Right ventricle myocardium inferior (tissue), 1 donor: ENCODE measurements at regions of chrX and their contacts with region 1.

Region 1: GRCh38 chrX:71365876-71366673 is at the start of gene TAF1:
- DNase-seq: peak; percentile 97
- ATAC-seq: peak; percentile 98
- total RNA-seq, gene TAF1: 14.6 TPM

Region 2: DNA sequence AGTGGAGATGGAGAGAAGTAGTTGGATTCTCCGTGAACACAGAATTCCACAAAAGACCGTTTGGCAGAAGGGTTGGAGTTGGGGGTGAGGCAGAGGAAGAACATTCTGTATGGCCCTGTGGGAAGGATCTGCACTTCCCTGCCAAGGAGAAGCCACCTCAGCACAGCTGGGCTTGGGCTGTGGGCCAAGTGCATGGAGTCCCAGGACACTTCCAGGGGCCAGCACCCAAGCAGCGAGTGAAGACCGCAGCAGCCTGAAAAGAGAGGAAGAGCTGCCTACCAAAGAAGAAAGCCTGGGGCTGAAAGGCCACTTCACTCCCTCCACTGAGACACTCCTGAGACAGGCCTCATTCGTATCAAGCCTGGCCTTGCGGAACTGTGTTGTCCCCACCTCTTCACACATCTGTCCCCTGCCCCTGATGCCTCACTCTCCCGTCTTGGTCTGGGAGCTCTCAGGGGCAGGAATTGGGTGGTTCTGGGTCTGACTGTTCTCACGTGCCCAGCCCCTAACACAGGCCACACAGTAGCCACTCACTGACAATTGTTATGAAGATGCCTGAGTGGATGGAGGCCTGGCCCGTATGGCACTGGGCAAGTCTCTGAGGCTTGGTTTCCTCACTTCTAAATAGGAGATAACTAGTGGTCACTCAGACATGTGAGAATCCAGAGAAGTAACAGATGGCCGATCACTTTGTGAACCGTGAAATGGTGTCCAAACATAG is 1313.0 kb before region 1 on chrX:
- intact Hi-C with region 1: no loop called
- DNase-seq: no peak
- ATAC-seq: no peak

Region 3: DNA sequence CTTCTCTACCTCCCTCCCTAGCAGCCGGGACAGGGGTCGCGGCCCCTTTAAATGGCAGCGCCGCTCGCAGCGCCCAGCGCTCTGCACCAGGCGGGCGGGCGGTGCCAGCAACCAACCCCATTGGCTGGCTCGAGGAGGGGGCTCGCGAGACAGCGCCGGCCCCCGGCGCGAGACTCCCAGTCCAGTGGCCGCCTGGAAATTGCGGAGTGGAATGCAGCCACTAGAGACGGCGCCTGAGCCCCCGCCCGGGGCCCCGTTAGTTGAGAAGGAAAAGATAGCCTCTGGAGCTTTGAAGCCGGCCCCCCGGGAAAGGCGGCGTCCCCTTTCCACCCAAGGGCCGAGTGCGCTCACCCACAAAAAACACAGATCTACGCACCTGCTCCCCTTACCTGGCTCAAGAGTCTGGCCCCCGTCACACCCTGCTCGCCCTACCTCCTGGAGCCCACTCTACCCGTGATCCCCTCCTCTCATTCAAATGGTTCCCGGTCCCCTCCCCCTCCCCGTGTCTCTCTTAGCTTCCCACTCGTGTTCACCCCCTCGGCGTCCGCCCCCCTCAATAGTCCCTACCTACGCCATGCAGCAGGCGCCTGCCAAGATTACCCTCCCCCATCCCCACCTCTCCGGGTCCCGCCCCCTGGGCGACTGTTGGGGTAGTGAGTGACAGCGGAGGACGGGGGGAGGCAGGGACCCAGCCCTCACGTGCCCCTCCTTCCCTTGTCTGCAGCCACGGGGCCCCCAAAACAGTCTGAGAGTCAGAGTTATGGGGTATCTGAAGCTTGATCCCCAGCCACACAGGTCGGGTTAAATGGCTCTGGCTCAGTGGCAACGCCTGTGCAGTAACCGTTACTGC is 111.8 kb before region 1 on chrX and contains the start of gene ZMYM3:
- intact Hi-C with region 1: loop called (anchors 2 kb)
- DNase-seq: peak; percentile 92
- ATAC-seq: peak; percentile 97
- total RNA-seq, gene ZMYM3: 14.2 TPM

Region 4: DNA sequence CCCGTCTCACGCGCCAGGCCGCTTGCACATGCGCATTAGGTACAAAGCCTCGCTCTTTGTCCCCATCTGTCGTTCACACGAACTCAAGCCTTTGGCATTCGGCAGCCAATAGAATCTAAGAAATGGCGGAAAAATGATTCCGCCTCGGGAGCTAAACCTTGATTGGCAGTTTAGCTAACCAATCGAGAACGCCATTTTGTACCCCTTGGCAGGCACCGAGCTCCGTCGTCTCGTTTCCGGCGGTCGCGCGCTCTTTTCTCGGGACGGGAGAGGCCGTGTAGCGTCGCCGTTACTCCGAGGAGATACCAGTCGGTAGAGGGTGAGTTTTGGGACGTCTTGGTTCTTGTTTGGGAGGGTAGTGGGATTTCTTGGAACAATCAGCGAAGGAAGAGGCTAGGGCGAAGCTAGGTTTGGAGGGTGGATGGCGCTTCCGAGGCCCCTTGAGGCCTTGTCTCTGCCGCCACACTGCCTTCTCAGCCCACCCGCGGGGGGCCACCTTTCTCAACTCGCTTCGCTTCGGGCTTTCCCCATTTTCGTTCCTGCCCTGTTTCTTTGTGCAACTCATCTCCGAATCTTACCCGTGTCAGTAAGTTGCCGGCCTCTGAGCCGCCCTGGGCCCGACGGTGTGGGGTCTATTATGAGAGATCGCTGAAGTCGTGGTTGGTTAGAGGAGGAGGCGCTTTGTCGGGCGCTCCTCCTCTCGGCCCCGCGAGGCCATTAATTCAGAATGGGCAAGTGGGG is 82.5 kb before region 1 on chrX and contains the start of gene NONO:
- intact Hi-C with region 1: loop called (anchors 10 kb)
- DNase-seq: peak; percentile 87
- ATAC-seq: peak; percentile 95
- total RNA-seq, gene NONO: 120 TPM